CD4-positive, alpha-beta T cell (primary cell): ENCODE measurements at regions of chr11 and their contacts with region 1.

Region 1: DNA sequence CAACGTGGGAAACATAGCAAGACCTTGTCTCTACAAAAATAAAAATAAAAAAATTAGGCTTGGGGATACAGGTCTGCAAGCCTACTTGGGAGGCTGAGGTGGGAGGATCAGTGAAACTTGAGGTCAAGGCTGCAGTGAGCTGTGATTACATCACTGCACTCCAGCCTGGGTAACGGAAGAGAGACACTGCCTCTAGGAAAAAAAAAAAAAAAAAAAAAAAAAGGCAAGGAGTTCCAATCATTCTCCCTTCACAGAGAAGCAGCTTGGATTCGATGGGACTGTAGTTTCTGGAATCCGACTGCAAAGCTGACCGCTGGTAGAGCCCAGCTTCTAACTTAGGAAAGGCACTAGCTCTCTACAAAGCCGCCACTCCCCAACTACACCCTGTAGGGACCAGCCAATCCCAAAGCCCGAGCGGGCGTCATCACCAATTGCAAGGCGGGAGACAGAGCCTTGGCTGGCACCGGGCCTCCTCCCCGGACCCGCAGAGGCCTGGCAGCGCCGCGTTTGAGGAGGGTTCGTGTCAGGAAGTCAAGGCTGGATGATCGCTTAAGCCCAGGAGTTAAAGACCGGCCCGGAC is 699 bp upstream of the DDB2 start:
- DNase-seq: peak; percentile 68 to 92 (median 78)
- ATAC-seq: peak; percentile 70
- H3K4me3 ChIP-seq: peak overlapping the region; percentile 67
- H3K4me3 Mint-ChIP-seq: peak overlapping the region; percentile 100
- H3K27ac ChIP-seq: peak overlapping the region; percentile 80 to 91
- H3K27ac Mint-ChIP-seq: peak overlapping the region; percentile 97
- H3K4me1 ChIP-seq: peaks cover 32% of the 10 kb centered on the region
- H3K4me1 Mint-ChIP-seq: peaks cover 38% of the 10 kb centered on the region
- H3K27me3 ChIP-seq: no peaks in the 10 kb centered on the region
- H3K27me3 Mint-ChIP-seq: no peaks in the 10 kb centered on the region
- CTCF ChIP-seq: no peak

Region 2: GRCh38 chr11:47186076-47186936 is 27.8 kb before region 1 on chr11 and contains the start of gene PACSIN3:
- CTCF ChIA-PET with region 1: no interaction called
- POLR2A ChIA-PET with region 1: interaction called, 26 read pairs
- intact Hi-C with region 1: no loop called
- DNase-seq: peak in 9 of 14 experiments; percentile 6 to 66 (median 40)
- ATAC-seq: peak; percentile 55
- H3K4me3 ChIP-seq: peak within 1 kb of the TSS; percentile 47
- H3K4me3 Mint-ChIP-seq: peak within 1 kb of the TSS; percentile 85
- H3K27ac ChIP-seq: no peak within 1 kb of the TSS
- H3K27ac Mint-ChIP-seq: no peak within 1 kb of the TSS
- H3K4me1 ChIP-seq: peaks cover 24% of the 10 kb centered on the region
- H3K4me1 Mint-ChIP-seq: peaks cover 6% of the 10 kb centered on the region
- H3K27me3 ChIP-seq: peaks cover 40 to 43% of the 10 kb centered on the region in 2 experiments
- H3K27me3 Mint-ChIP-seq: peaks cover 35% of the 10 kb centered on the region
- CTCF ChIP-seq: no peak
- total RNA-seq, gene PACSIN3: 0.27 TPM in 1 of 2 experiments, not detected in the other

Region 3: GRCh38 chr11:47201015-47201414 is 13.1 kb before region 1 on chr11:
- CTCF ChIA-PET with region 1: no interaction called
- POLR2A ChIA-PET with region 1: no interaction called
- intact Hi-C with region 1: no loop called
- DNase-seq: no peak
- ATAC-seq: no peak
- H3K4me3 ChIP-seq: no peak overlapping the region
- H3K4me3 Mint-ChIP-seq: no peak overlapping the region
- H3K27ac ChIP-seq: no peak overlapping the region
- H3K27ac Mint-ChIP-seq: no peak overlapping the region
- H3K4me1 ChIP-seq: no peaks in the 10 kb centered on the region
- H3K4me1 Mint-ChIP-seq: no peaks in the 10 kb centered on the region
- H3K27me3 ChIP-seq: no peaks in the 10 kb centered on the region
- H3K27me3 Mint-ChIP-seq: no peaks in the 10 kb centered on the region
- CTCF ChIP-seq: no peak

Region 4: DNA sequence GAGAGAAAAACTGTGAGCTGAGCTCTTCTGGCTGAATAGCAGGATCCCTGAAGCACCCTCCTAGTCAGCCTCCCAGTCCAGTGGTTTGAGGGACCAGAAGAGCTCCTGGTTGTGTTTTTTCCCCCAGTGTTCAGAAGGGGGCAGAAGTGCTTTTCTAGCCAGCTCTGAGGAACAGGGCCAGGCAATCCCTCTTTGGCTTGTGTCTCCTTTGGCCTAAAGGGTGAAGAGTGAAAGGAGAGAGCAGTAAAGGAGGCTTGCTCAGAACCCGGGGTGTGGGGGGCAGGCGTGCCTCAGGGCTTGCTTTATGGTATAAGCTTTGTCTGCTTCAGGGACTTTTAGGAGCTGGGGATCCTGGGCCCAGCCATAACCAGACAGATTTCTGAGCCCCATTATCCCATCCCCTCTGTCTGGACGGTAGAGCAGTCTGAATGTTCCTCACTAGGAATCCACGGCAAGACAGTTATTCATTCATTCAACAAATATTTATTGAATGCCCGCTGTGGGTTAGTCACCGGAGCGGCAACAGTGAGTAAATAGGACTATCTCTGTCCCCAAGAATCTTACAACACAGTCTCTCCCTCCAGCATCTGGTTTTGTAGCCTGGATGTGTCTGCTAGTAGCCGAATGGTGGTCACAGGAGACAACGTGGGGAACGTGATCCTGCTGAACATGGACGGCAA is 20.1 kb after region 1 on chr11:
- CTCF ChIA-PET with region 1: interaction called, 7 read pairs
- POLR2A ChIA-PET with region 1: interaction called, 51 read pairs
- intact Hi-C with region 1: loop called (anchors 1 to 2 kb)
- DNase-seq: peak in 8 of 14 experiments; percentile 9 to 69 (median 22)
- ATAC-seq: no peak
- H3K4me3 ChIP-seq: peak overlapping the region; percentile 10
- H3K4me3 Mint-ChIP-seq: peak overlapping the region; percentile 80
- H3K27ac ChIP-seq: peak overlapping the region; percentile 65 to 72
- H3K27ac Mint-ChIP-seq: peak overlapping the region; percentile 94
- H3K4me1 ChIP-seq: peaks cover 24% of the 10 kb centered on the region
- H3K4me1 Mint-ChIP-seq: peaks cover 29% of the 10 kb centered on the region
- H3K27me3 ChIP-seq: no peaks in the 10 kb centered on the region
- H3K27me3 Mint-ChIP-seq: no peaks in the 10 kb centered on the region
- CTCF ChIP-seq: peak; percentile 11

Region 5: GRCh38 chr11:47241841-47242301 is 27.8 kb after region 1 on chr11:
- CTCF ChIA-PET with region 1: interaction called, 15 read pairs
- POLR2A ChIA-PET with region 1: interaction called, 51 read pairs
- intact Hi-C with region 1: no loop called
- DNase-seq: no peak
- ATAC-seq: no peak
- H3K4me3 ChIP-seq: no peak overlapping the region
- H3K4me3 Mint-ChIP-seq: no peak overlapping the region
- H3K27ac ChIP-seq: no peak overlapping the region
- H3K27ac Mint-ChIP-seq: peak overlapping the region; percentile 11
- H3K4me1 ChIP-seq: peaks cover 1% of the 10 kb centered on the region
- H3K4me1 Mint-ChIP-seq: peaks cover 6% of the 10 kb centered on the region
- H3K27me3 ChIP-seq: no peaks in the 10 kb centered on the region
- H3K27me3 Mint-ChIP-seq: no peaks in the 10 kb centered on the region
- CTCF ChIP-seq: no peak

Region 6: GRCh38 chr11:47248664-47249377 is 34.7 kb after region 1 on chr11 and contains the start of gene ACP2:
- CTCF ChIA-PET with region 1: interaction called, 15 read pairs
- POLR2A ChIA-PET with region 1: interaction called, 63 read pairs
- intact Hi-C with region 1: loop called (anchors 1 to 2 kb)
- DNase-seq: peak; percentile 78 to 93 (median 82)
- ATAC-seq: peak; percentile 97
- H3K4me3 ChIP-seq: peak within 1 kb of the TSS; percentile 77
- H3K4me3 Mint-ChIP-seq: peak within 1 kb of the TSS; percentile 94
- H3K27ac ChIP-seq: peak within 1 kb of the TSS; percentile 75 to 82
- H3K27ac Mint-ChIP-seq: peak within 1 kb of the TSS; percentile 93
- H3K4me1 ChIP-seq: peaks cover 28% of the 10 kb centered on the region
- H3K4me1 Mint-ChIP-seq: peaks cover 29% of the 10 kb centered on the region
- H3K27me3 ChIP-seq: no peaks in the 10 kb centered on the region
- H3K27me3 Mint-ChIP-seq: no peaks in the 10 kb centered on the region
- CTCF ChIP-seq: no peak
- total RNA-seq, gene ACP2: 16.8 to 17.2 TPM

Region 7: DNA sequence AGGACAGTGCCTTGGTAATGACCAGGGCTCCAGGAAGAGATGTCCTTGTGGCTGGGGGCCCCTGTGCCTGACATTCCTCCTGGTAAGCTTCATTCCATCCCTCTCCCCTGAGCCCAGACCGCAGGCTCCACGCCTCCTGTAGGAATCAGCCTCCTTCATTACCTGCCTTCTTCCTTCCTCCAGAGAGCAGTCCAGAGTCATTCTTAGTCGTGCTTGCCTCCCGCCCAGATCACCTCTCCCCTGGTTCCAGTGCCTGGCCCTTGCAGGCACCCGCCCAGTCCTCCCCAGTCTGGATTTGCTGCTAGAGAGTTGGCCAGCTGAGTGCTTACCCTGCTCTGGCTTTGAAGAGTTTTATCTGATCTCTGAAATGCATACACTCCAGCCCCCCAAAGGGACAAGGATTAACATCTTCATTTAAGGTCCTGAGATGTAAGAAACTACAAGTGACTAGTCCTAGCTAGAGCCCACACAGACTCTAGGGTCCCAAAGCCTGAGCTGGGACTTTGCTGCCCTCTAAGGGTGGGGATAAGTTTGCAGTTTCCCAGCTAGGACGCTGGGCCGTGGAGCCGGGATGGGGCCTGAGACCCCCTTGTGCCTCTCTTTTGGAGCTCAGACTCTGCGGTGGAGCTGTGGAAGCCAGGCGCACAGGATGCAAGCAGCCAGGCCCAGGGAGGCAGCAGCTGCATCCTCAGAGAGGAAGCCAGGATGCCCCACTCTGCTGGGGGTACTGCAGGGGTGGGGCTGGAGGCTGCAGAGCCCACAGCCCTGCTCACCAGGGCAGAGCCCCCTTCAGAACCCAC is 45.3 kb after region 1 on chr11:
- CTCF ChIA-PET with region 1: no interaction called
- POLR2A ChIA-PET with region 1: interaction called, 19 read pairs
- intact Hi-C with region 1: no loop called
- DNase-seq: peak in 8 of 14 experiments; percentile 9 to 61 (median 30)
- ATAC-seq: peak; percentile 82
- H3K4me3 ChIP-seq: no peak overlapping the region
- H3K4me3 Mint-ChIP-seq: no peak overlapping the region
- H3K27ac ChIP-seq: no peak overlapping the region
- H3K27ac Mint-ChIP-seq: no peak overlapping the region
- H3K4me1 ChIP-seq: peaks cover 17% of the 10 kb centered on the region
- H3K4me1 Mint-ChIP-seq: peaks cover 14% of the 10 kb centered on the region
- H3K27me3 ChIP-seq: no peaks in the 10 kb centered on the region
- H3K27me3 Mint-ChIP-seq: no peaks in the 10 kb centered on the region
- CTCF ChIP-seq: peak; percentile 47

Region 8: DNA sequence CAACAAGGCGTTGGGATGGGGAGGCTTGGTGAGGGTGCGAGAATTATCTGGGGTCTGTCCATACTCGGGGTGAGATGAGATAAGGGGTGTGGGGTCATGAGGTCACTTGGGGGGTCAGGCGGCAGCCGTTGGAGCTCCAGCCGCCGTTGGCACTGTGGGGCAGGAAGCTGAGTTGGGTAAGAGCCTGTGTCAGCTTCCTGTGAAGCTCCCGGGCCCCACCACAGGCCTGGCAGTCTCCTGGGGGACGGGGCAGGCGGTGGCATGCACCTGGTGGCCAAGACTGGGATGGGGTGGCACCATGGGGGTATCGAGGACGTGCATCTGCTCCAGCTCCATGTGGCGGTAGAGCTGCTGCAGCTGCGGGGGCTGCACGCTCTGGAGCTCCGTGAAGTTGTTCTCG is 145.5 kb after region 1 on chr11:
- CTCF ChIA-PET with region 1: no interaction called
- POLR2A ChIA-PET with region 1: no interaction called
- intact Hi-C with region 1: no loop called
- DNase-seq: peak in 2 of 14 experiments; percentile 14 to 39
- ATAC-seq: no peak
- H3K4me3 ChIP-seq: no peak overlapping the region
- H3K4me3 Mint-ChIP-seq: no peak overlapping the region
- H3K27ac ChIP-seq: no peak overlapping the region
- H3K27ac Mint-ChIP-seq: no peak overlapping the region
- H3K4me1 ChIP-seq: peaks cover 12% of the 10 kb centered on the region
- H3K4me1 Mint-ChIP-seq: peaks cover 12% of the 10 kb centered on the region
- H3K27me3 ChIP-seq: no peaks in the 10 kb centered on the region
- H3K27me3 Mint-ChIP-seq: no peaks in the 10 kb centered on the region
- CTCF ChIP-seq: no peak